ENCODE measurements at regions of chr12 and their contacts with region 1.

Region 1: GRCh38 chr12:54279866-54280467 is at the start of gene CBX5:
- DNase-seq: peak; percentile 99
- H3K4me3 ChIP-seq: peak within 1 kb of the TSS; percentile 28 to 78 (median 61)
- H3K27ac ChIP-seq: peak within 1 kb of the TSS; percentile 88
- H3K4me1 ChIP-seq: peaks cover 43% of the 10 kb centered on the region
- H3K27me3 ChIP-seq: no peaks in the 10 kb centered on the region
- CTCF ChIP-seq: no peak
- POLR2A ChIP-seq: peak; percentile 1
- total RNA-seq, gene CBX5: 111 TPM in 2 replicates

Region 2: DNA sequence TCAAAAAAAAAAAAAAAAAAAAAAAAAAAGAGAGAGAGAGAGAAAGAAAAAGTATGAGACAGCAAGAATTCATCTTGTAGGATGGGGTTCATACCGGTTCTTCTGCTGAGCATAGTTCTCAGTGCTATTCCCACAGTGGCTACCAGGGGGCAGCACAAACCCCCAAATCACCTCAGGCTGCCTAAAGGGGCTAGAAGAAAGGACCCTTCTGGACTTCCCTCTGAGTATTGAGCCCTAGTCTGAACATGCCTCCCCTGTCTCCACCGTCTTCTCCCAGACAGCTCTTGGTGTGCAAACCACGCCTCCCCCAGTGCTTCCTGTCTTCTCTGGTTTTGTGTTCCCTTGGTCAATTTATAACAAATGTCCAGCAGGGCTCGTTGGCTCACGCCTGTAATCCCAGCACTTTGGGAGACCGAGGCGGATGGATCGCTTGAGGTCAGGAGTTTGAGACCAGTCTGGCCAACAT is 59.8 kb before region 1 on chr12:
- CTCF ChIA-PET with region 1: interaction called, 3 read pairs
- POLR2A ChIA-PET with region 1: interaction called, 3 read pairs
- dilution Hi-C with region 1: no loop called
- intact Hi-C with region 1: loop called (anchors 1 kb)
- DNase-seq: peak; percentile 76
- H3K4me3 ChIP-seq: no peak overlapping the region
- H3K27ac ChIP-seq: no peak overlapping the region
- H3K4me1 ChIP-seq: peaks cover 14% of the 10 kb centered on the region
- H3K27me3 ChIP-seq: peaks cover 2 to 5% of the 10 kb centered on the region in 2 experiments
- CTCF ChIP-seq: peak; percentile 77 to 85
- POLR2A ChIP-seq: no peak

Region 3: GRCh38 chr12:54259194-54260011 is 20.6 kb before region 1 on chr12:
- CTCF ChIA-PET with region 1: interaction called, 13 read pairs
- POLR2A ChIA-PET with region 1: interaction called, 29 read pairs
- dilution Hi-C with region 1: no loop called
- intact Hi-C with region 1: loop called (anchors 1 kb)
- DNase-seq: peak; percentile 90
- H3K4me3 ChIP-seq: peak overlapping the region; percentile 10 to 76 (median 31)
- H3K27ac ChIP-seq: peak overlapping the region; percentile 74
- H3K4me1 ChIP-seq: peaks cover 40% of the 10 kb centered on the region
- H3K27me3 ChIP-seq: no peaks in the 10 kb centered on the region
- CTCF ChIP-seq: no peak
- POLR2A ChIP-seq: peak; percentile 49

Region 4: DNA sequence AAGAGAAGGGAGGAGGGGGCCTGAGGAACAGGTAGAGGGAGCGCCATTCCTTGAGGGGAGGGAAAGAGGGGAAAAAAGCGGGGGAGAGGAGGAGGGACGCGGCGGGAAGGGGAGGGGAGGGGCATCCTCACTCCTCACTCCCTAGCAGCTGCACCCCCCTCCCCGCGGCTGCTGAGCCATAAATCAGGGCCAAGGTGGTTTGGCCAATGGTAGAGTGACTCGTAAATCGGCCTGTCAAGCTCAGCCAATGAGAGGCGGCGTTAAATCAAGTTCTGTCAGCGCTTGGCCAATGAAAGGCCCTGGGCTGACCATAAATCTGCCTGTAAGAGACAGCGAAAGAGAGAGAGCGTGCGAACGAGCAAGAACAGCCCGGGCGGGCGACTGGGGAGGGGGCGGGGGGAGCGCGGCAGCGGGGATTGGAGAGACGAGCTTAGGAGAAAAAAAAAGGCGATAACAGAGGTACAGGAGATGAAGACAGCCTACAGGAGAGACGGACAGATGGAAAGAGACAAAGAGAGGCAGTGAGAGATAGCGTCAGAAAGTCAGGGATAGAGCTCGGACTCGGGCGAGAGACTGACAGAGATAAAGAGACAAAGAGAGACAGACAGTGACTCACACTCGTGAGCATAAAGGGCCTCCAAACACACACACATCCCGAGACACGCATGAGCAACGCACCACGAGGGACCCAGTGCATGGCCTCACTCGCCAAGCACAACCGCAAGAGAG is 79.2 kb after region 1 on chr12:
- CTCF ChIA-PET with region 1: interaction called, 8 read pairs
- POLR2A ChIA-PET with region 1: interaction called, 11 read pairs
- dilution Hi-C with region 1: no loop called
- intact Hi-C with region 1: loop called (anchors 1 kb)
- DNase-seq: peak; percentile 99
- H3K4me3 ChIP-seq: peak overlapping the region; percentile 27 to 69 (median 69)
- H3K27ac ChIP-seq: peak overlapping the region; percentile 82
- H3K4me1 ChIP-seq: peaks cover 27% of the 10 kb centered on the region
- H3K27me3 ChIP-seq: no peaks in the 10 kb centered on the region
- CTCF ChIP-seq: no peak
- POLR2A ChIP-seq: peak; percentile 78

Region 5: DNA sequence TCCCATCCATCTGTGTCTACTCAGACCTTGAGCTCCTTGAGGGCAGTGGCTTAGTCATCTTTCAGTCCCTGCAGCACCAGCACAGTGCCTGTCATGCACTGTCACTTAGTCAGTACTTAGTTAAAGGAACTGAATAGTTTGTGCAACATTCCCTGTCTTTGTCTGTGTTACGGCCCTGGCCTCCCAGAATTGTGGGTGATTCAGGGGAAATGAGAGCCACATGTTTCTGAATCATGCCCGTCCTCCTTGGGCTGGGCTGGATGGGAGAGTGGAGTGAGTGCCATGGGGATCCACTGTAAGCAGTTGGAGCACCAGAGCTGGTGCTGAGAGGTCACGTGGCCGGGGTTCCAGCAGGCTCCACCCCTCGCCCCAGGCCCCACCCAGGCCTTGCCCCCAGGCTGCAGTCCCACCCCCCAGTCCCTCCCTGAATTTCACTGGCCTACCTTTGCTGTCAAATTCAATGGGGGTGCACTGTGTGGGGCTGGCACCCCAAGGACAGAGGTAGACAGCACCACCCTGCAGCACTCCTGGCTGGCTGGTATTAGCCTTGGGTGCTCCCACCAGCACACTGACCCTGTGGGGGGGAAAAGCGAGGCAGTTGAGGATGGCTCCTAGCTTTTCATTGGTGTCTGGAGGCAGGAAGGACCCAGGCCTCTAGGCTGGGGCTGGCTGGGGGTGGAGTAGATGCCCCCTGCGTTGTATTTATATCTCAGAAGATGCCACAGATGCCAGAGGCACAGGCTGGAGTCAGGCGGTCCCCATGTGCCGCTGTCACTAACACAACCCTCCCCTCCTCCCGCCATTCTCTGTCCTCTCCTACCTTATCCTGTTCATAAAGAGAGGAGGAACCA is 131.6 kb after region 1 on chr12:
- CTCF ChIA-PET with region 1: no interaction called
- POLR2A ChIA-PET with region 1: interaction called, 3 read pairs
- dilution Hi-C with region 1: no loop called
- intact Hi-C with region 1: loop called (anchors 5 kb)
- DNase-seq: peak; percentile 88
- H3K4me3 ChIP-seq: no peak overlapping the region
- H3K27ac ChIP-seq: peak overlapping the region; percentile 96
- H3K4me1 ChIP-seq: peaks cover 58% of the 10 kb centered on the region
- H3K27me3 ChIP-seq: no peaks in the 10 kb centered on the region
- CTCF ChIP-seq: no peak
- POLR2A ChIP-seq: no peak

Region 6: DNA sequence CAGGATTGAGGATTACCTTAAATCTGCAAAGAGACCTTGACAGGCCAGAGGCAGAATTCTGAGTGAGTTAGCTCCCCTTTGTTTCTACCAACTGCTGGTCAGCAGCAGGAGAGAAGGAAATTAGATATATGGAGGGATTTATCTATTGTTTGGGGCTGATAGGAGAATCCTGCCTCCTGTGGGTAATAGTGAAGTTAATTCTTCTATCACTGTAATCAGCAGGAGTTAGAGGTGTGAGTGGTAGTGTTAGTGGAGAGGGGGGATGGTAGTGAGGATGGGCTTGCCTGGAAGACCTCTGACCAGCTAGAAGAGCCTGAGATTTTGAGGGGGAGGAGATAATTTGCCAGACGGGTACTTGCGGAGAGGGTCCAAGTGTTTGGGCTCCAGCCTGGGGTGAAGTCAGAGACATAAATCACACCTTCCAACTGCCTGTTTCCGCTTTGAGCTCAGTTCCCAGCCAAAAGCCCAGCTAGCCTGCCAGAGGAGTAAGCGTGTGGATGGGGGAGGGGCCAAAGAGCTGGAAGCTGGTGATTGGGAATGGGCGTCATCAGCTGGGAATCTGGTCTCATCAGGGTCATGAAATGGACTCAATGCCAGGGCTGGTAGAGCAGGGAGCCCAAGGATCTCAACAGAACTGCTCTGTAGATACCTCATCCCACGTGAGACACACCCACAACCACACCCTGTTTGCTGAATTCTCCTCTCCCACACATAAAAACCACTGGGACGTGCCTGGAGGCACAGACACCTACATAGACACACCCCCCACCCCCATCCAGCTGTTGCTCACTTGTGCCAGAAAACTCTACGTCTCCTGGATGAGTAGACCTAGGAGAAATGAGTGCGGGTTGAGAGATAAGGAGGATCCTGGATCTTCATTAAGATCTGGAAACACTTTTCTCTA is 152.2 kb after region 1 on chr12:
- CTCF ChIA-PET with region 1: no interaction called
- POLR2A ChIA-PET with region 1: no interaction called
- dilution Hi-C with region 1: no loop called
- intact Hi-C with region 1: loop called (anchors 5 kb)
- DNase-seq: peak; percentile 97
- H3K4me3 ChIP-seq: peak overlapping the region in 1 of 3 experiments; percentile 39
- H3K27ac ChIP-seq: peak overlapping the region; percentile 91
- H3K4me1 ChIP-seq: peaks cover 59% of the 10 kb centered on the region
- H3K27me3 ChIP-seq: no peaks in the 10 kb centered on the region
- CTCF ChIP-seq: no peak
- POLR2A ChIP-seq: no peak

Region 7: DNA sequence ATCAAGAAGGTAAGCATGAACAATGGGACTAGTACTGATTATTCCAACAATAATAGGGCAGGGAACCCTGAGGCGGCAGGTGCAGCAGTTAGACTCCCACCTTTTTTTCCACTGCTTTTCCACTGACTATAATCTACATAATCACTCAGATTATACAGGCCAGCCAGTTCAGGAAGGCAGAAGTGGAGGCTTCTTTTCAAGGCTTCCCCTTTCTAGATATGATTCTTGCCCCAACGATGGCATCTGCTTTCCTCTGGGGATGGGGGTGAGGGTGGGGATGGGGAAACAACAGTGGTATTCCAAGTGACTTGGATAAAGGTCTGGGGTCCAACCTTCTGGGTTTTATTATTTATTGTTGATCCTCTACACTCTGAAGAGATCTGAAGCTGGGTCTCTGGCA is 217.9 kb after region 1 on chr12:
- CTCF ChIA-PET with region 1: no interaction called
- POLR2A ChIA-PET with region 1: no interaction called
- dilution Hi-C with region 1: no loop called
- intact Hi-C with region 1: no loop called
- DNase-seq: no peak
- H3K4me3 ChIP-seq: no peak overlapping the region
- H3K27ac ChIP-seq: no peak overlapping the region
- H3K4me1 ChIP-seq: peaks cover 11% of the 10 kb centered on the region
- H3K27me3 ChIP-seq: no peaks in the 10 kb centered on the region
- CTCF ChIP-seq: no peak
- POLR2A ChIP-seq: no peak

Measured in endothelial cell of umbilical vein (primary cell).